Head of caudate nucleus (tissue), 42 donors: ENCODE measurements at regions of chr17 and their contacts with region 1.

Region 1: GRCh38 chr17:41648411-41649195 is 24.2 kb upstream of the KRT17 start:
- DNase-seq: peak; percentile 72 to 93 (median 87)

Region 2: GRCh38 chr17:41518789-41519449 is 129.7 kb before region 1 on chr17 and contains the start of gene KRT15:
- intact Hi-C with region 1: no loop called
- DNase-seq: no peak

Region 3: DNA sequence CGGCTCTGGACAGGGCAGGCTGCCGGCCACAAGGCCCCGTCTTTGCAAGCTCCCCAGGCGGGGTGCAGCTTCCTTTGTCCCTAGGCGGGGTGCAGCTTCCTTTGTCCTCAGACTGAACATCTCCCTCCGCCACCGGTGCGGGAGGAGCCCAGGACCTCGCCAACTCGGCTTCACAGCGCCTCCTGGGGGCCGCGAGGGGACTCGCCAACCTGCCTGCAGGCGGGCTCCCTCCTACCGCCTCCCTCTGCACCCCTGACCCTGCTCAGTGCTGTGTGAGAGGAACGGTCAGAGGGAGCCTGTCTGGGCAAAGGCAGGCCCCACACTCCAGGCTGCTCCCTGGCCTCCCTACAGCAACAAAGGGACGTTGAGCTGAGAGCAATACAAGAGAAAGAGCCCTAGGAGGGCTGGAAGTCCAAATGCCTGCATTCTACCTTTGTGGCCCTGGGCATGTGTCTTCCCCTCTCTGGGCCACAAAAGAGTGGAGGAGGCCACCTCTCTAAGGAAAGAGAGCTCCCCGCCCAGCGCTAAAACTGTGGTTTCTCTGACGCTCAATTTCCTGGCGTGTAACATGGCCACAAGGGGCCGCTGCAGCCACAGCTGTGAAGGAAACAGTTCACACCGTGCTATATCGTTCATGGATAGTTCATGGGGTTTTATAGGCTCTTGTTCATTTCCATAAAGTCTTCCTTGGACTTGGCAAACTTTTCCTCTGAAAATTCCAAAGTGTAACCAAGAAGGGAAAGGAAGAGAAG is 99.6 kb before region 1 on chr17:
- intact Hi-C with region 1: loop called (anchors 5 kb)
- DNase-seq: peak; percentile 64 to 91 (median 82)

Region 4: DNA sequence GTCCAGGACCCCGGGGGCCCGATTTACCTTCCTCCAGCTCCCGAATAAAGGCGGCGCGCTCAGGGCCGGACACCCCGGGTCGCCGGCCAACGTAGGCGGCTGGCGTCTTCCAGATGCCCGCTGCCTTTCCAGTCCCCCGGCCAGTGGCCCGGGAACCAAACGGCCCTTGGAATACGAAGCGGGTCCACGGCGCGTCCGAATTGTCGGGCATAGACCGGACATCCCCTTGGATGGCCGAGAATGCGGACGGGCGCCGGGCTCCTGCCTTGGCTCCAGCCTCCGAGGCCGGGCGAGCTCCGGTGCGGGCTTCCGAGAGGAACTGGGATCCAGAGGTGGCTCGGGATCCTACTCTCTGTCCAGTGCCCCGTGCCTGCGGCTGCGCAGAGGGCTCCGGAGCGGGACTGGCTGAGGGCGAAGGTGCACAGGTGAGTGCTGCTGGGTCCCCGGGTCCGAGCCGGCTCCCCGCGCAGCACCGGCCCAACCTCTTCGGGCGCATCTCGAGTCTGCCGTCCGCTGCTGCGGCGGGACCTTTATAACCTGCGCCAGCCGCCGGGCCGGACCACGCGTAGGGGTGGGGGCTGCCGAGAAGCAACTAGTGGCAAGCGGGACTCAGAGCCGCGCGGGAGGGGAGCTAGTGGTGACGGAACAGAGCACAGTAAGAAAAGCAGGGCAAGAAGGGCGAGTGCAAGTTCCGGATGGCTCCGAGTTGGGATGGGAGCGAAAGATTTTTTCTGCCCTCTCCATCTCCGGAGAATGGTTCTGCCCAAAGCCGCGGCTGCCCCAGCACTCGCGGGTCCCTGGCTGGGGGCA is 85.7 kb after region 1 on chr17 and contains the start of gene HAP1:
- intact Hi-C with region 1: no loop called
- DNase-seq: peak in 40 of 42 donors; percentile 22 to 79 (median 53)